Ovary (tissue), 10 donors: ENCODE measurements at regions of chr2 and their contacts with region 1.

Region 1: GRCh38 chr2:214069265-214069664 is 341.6 kb upstream of the VWC2L start:
- DNase-seq: no peak
- H3K4me3 ChIP-seq: no peak overlapping the region
- H3K27ac ChIP-seq: no peak overlapping the region
- H3K4me1 ChIP-seq: no peaks in the 10 kb centered on the region
- H3K27me3 ChIP-seq: no peaks in the 10 kb centered on the region
- CTCF ChIP-seq: no peak
- EP300 ChIP-seq: no peak
- POLR2A ChIP-seq: no peak

Region 2: GRCh38 chr2:212752730-212753351 is 1316.4 kb before region 1 on chr2:
- intact Hi-C with region 1: loop called in 1 of 4 experiments (anchors 5 kb)
- DNase-seq: no peak
- H3K4me3 ChIP-seq: no peak overlapping the region
- H3K27ac ChIP-seq: no peak overlapping the region
- H3K4me1 ChIP-seq: no peaks in the 10 kb centered on the region
- H3K27me3 ChIP-seq: no peaks in the 10 kb centered on the region
- CTCF ChIP-seq: no peak
- EP300 ChIP-seq: no peak
- POLR2A ChIP-seq: no peak

Region 3: DNA sequence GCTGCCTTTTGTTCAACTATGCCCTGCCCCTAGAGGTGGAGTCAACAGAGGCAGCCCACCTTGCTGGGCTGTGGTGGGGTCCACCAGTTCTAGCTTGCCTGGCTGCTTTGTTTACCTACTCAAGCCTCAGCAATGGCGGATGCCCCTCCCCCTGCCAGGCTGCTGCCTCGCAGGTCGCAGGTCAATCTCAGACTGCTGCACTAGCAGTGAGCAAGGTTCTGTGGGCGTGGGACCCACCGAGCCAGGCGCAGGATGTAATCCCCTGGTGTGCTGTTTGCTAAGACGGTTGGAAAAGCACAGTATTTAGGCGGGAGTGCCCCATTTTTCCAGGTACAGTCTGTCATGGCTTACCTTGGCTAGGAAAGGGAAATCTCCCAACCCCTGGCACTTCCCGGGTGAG is 208.6 kb after region 1 on chr2:
- intact Hi-C with region 1: no loop called
- DNase-seq: no peak
- H3K4me3 ChIP-seq: no peak overlapping the region
- H3K27ac ChIP-seq: no peak overlapping the region
- H3K4me1 ChIP-seq: no peaks in the 10 kb centered on the region
- H3K27me3 ChIP-seq: no peaks in the 10 kb centered on the region
- CTCF ChIP-seq: no peak
- EP300 ChIP-seq: no peak
- POLR2A ChIP-seq: no peak

Region 4: DNA sequence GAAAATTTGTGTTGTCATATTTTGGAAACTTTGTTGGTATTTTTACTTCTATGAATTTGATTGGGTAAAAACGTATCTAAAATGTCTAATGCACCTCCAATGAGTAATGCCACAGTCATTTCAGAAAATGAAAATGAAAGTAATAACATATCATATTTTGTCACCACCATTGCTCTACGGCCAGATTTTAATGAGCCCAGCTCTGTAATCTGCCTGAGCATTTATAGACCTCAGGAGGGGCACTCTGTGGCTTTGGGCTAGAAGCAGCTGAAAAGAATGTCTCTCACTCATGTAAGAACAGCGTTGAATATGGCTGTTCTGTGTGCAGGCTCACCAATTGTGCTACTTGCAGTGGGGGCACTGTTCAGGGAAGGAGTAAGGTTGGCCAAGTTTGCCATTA is 1101.9 kb after region 1 on chr2:
- intact Hi-C with region 1: no loop called
- DNase-seq: no peak
- H3K4me3 ChIP-seq: no peak overlapping the region
- H3K27ac ChIP-seq: no peak overlapping the region
- H3K4me1 ChIP-seq: peaks cover 2% of the 10 kb centered on the region
- H3K27me3 ChIP-seq: no peaks in the 10 kb centered on the region
- CTCF ChIP-seq: no peak
- EP300 ChIP-seq: no peak
- POLR2A ChIP-seq: no peak